ENCODE measurements at regions of chr6 and their contacts with region 1.

Region 1: GRCh38 chr6:125986300-125987025 is at the start of gene TRMT11:
- DNase-seq: peak; percentile 63 to 92 (median 76)
- ATAC-seq: peak; percentile 95
- H3K4me3 ChIP-seq: peak within 1 kb of the TSS; percentile 89
- H3K4me3 Mint-ChIP-seq: peak within 1 kb of the TSS; percentile 52
- H3K27ac ChIP-seq: peak within 1 kb of the TSS; percentile 54 to 88
- H3K27ac Mint-ChIP-seq: no peak within 1 kb of the TSS
- H3K4me1 ChIP-seq: peaks cover 13% of the 10 kb centered on the region
- H3K4me1 Mint-ChIP-seq: no peaks in the 10 kb centered on the region
- H3K27me3 ChIP-seq: no peaks in the 10 kb centered on the region
- H3K27me3 Mint-ChIP-seq: no peaks in the 10 kb centered on the region
- CTCF ChIP-seq: no peak
- total RNA-seq, gene TRMT11: 21.6 to 22.5 TPM

Region 2: GRCh38 chr6:125301435-125302391 is 684.8 kb before region 1 on chr6 and contains the start of gene HDDC2:
- CTCF ChIA-PET with region 1: no interaction called
- POLR2A ChIA-PET with region 1: interaction called, 12 read pairs
- intact Hi-C with region 1: loop called in 1 of 2 experiments (anchors 5 kb)
- DNase-seq: peak in 13 of 14 experiments; percentile 9 to 67 (median 37)
- ATAC-seq: peak; percentile 33
- H3K4me3 ChIP-seq: peak within 1 kb of the TSS; percentile 64
- H3K4me3 Mint-ChIP-seq: peak within 1 kb of the TSS; percentile 91
- H3K27ac ChIP-seq: peak within 1 kb of the TSS; percentile 66 to 70
- H3K27ac Mint-ChIP-seq: peak within 1 kb of the TSS; percentile 90
- H3K4me1 ChIP-seq: peaks cover 32% of the 10 kb centered on the region
- H3K4me1 Mint-ChIP-seq: peaks cover 64% of the 10 kb centered on the region
- H3K27me3 ChIP-seq: no peaks in the 10 kb centered on the region
- H3K27me3 Mint-ChIP-seq: peaks cover 5% of the 10 kb centered on the region
- CTCF ChIP-seq: no peak
- total RNA-seq, gene HDDC2: 19.4 to 21.6 TPM

Region 3: GRCh38 chr6:125749173-125749864 is 237.1 kb before region 1 on chr6 and contains the start of gene HEY2:
- CTCF ChIA-PET with region 1: no interaction called
- POLR2A ChIA-PET with region 1: interaction called, 12 read pairs
- intact Hi-C with region 1: no loop called
- DNase-seq: peak; percentile 55 to 92 (median 76)
- ATAC-seq: peak; percentile 63
- H3K4me3 ChIP-seq: peak within 1 kb of the TSS; percentile 67
- H3K4me3 Mint-ChIP-seq: peak within 1 kb of the TSS; percentile 93
- H3K27ac ChIP-seq: no peak within 1 kb of the TSS
- H3K27ac Mint-ChIP-seq: peak within 1 kb of the TSS; percentile 43
- H3K4me1 ChIP-seq: peaks cover 38% of the 10 kb centered on the region
- H3K4me1 Mint-ChIP-seq: peaks cover 38% of the 10 kb centered on the region
- H3K27me3 ChIP-seq: peaks cover 44 to 58% of the 10 kb centered on the region in 2 experiments
- H3K27me3 Mint-ChIP-seq: peaks cover 85% of the 10 kb centered on the region
- CTCF ChIP-seq: peak; percentile 16
- total RNA-seq, gene HEY2: 0.08 to 0.30 TPM

Region 4: DNA sequence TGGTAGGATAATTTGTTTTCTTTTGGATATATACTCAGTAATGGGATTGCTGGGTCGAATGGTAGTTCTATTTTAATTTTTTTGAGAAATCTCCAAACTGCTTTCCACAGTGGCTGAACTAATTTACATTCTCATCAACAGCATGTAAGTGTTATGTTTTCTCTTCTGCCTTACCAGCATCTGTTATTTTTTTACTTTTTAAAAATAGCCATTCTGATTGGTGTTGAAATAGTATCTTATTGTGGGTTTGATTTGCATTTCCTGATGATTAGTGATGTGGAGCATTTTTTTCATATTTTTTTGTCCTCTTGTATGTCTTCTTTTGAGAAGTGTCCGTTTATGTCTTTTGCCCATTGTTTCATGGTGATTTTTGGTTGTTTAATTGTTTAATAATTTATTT is 18.0 kb before region 1 on chr6:
- CTCF ChIA-PET with region 1: no interaction called
- POLR2A ChIA-PET with region 1: interaction called, 20 read pairs
- intact Hi-C with region 1: no loop called
- DNase-seq: no peak
- ATAC-seq: no peak
- H3K4me3 ChIP-seq: no peak overlapping the region
- H3K4me3 Mint-ChIP-seq: no peak overlapping the region
- H3K27ac ChIP-seq: no peak overlapping the region
- H3K27ac Mint-ChIP-seq: no peak overlapping the region
- H3K4me1 ChIP-seq: no peaks in the 10 kb centered on the region
- H3K4me1 Mint-ChIP-seq: peaks cover 51% of the 10 kb centered on the region
- H3K27me3 ChIP-seq: no peaks in the 10 kb centered on the region
- H3K27me3 Mint-ChIP-seq: no peaks in the 10 kb centered on the region
- CTCF ChIP-seq: no peak

Region 5: GRCh38 chr6:125974214-125974866 is 12.1 kb before region 1 on chr6:
- CTCF ChIA-PET with region 1: interaction called, 3 read pairs
- POLR2A ChIA-PET with region 1: interaction called, 20 read pairs
- intact Hi-C with region 1: no loop called
- DNase-seq: peak in 3 of 14 experiments; percentile 63 to 67 (median 65)
- ATAC-seq: peak; percentile 84
- H3K4me3 ChIP-seq: no peak overlapping the region
- H3K4me3 Mint-ChIP-seq: no peak overlapping the region
- H3K27ac ChIP-seq: no peak overlapping the region
- H3K27ac Mint-ChIP-seq: no peak overlapping the region
- H3K4me1 ChIP-seq: no peaks in the 10 kb centered on the region
- H3K4me1 Mint-ChIP-seq: peaks cover 16% of the 10 kb centered on the region
- H3K27me3 ChIP-seq: no peaks in the 10 kb centered on the region
- H3K27me3 Mint-ChIP-seq: no peaks in the 10 kb centered on the region
- CTCF ChIP-seq: peak; percentile 67

Region 6: DNA sequence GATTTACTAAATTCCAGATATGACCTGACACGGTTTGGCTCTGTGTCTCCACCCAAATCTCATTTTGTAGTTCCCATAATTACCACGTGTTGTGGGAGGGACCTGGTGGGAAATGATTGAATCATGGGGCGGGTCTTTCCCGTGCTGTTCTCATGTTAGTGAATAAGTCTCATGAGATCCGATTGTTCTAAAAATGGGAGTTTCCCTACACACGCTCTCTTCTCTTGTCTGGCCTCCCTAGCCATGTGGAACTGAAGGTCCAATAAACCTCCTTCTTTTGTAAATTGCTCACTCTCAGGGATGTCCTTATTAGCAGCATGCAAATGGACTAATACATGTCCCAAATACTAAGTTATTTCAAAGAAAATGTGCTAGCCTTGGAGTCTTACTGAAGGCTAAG is 474.6 kb after region 1 on chr6:
- CTCF ChIA-PET with region 1: no interaction called
- POLR2A ChIA-PET with region 1: no interaction called
- intact Hi-C with region 1: no loop called
- DNase-seq: no peak
- ATAC-seq: no peak
- H3K4me3 ChIP-seq: no peak overlapping the region
- H3K4me3 Mint-ChIP-seq: no peak overlapping the region
- H3K27ac ChIP-seq: no peak overlapping the region
- H3K27ac Mint-ChIP-seq: no peak overlapping the region
- H3K4me1 ChIP-seq: no peaks in the 10 kb centered on the region
- H3K4me1 Mint-ChIP-seq: no peaks in the 10 kb centered on the region
- H3K27me3 ChIP-seq: no peaks in the 10 kb centered on the region
- H3K27me3 Mint-ChIP-seq: no peaks in the 10 kb centered on the region
- CTCF ChIP-seq: no peak

Measured in CD4-positive, alpha-beta T cell (primary cell).